ENCODE measurements at regions of chr5 and their contacts with region 1.

Region 1: GRCh38 chr5:119411935-119412602 is 40.2 kb upstream of the HSD17B4 start:
- DNase-seq: peak in 7 of 9 donors; percentile 54 to 73 (median 68)
- ATAC-seq: peak; percentile 92
- H3K4me3 ChIP-seq: peak overlapping the region; percentile 59
- H3K4me3 Mint-ChIP-seq: peak overlapping the region; percentile 88 to 93 (median 91)
- H3K27ac ChIP-seq: peak overlapping the region; percentile 15
- H3K27ac Mint-ChIP-seq: peak overlapping the region; percentile 55 to 86 (median 76)
- H3K4me1 ChIP-seq: peaks cover 0 to 5% of the 10 kb centered on the region in 2 donors
- H3K4me1 Mint-ChIP-seq: peaks cover 11 to 32% (median 20%) of the 10 kb centered on the region in 7 donors
- H3K27me3 ChIP-seq: no peaks in the 10 kb centered on the region
- H3K27me3 Mint-ChIP-seq: peaks cover 0 to 5% (median 0%) of the 10 kb centered on the region in 5 donors

Region 2: DNA sequence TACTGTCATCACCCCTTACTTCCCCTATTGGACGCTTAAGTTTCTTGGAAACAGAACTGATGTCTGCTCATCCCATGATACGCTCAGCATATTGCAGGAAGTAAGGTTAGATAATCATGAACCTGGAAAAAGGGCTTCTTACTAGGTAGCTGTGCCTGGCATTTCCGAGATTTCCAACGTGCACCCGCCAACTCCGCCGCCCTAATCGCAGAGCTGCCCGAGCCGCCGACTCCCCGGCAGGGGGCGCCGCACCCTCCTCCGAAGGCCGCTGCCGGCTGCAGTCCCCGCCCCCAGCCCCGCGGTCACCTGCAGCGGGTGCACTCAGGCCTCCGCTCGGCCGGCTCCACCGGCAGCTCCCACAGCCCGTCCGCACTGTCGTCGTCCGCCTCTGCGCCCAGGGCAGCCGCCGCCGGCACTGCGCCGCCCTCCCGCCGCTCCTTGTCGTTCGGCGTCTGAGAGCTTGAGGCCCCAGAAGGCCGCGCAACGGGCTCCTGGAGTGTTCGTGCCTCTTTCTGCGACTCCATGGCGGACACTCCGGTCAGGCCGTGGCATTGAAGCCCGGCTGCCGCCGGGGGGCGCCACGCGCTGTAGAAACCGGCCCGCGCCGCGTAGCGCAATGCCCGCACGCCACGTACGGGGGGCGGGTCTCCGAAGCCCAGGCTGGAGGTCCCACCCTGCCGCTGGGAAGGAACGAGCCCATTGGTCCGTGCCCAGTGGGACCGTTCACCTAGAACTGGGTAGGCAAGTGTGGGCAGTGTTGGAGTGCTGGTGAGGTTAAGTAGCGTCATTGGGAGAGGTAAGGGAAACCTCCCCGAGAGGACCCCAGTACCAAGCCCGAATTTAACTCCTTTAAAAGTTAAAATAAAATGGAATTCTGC is 423.8 kb before region 1 on chr5 and contains the start of gene DTWD2:
- CTCF ChIA-PET with region 1: interaction called, 54 read pairs
- POLR2A ChIA-PET with region 1: interaction called, 3 read pairs
- intact Hi-C with region 1: loop called (anchors 1 kb)
- DNase-seq: peak; percentile 84 to 98 (median 95)
- ATAC-seq: peak; percentile 95
- H3K4me3 ChIP-seq: peak within 1 kb of the TSS; percentile 59
- H3K4me3 Mint-ChIP-seq: peak within 1 kb of the TSS; percentile 78 to 87 (median 84)
- H3K27ac ChIP-seq: peak within 1 kb of the TSS; percentile 74
- H3K27ac Mint-ChIP-seq: peak within 1 kb of the TSS in 8 of 9 donors; percentile 19 to 84 (median 79)
- H3K4me1 ChIP-seq: peaks cover 6 to 8% of the 10 kb centered on the region in 2 donors
- H3K4me1 Mint-ChIP-seq: peaks cover 14 to 39% (median 28%) of the 10 kb centered on the region in 7 donors
- H3K27me3 ChIP-seq: no peaks in the 10 kb centered on the region
- H3K27me3 Mint-ChIP-seq: peaks cover 0 to 2% (median 0%) of the 10 kb centered on the region in 5 donors
- total RNA-seq, gene DTWD2: 2.6 to 5.8 (median 3.4) TPM

Region 3: DNA sequence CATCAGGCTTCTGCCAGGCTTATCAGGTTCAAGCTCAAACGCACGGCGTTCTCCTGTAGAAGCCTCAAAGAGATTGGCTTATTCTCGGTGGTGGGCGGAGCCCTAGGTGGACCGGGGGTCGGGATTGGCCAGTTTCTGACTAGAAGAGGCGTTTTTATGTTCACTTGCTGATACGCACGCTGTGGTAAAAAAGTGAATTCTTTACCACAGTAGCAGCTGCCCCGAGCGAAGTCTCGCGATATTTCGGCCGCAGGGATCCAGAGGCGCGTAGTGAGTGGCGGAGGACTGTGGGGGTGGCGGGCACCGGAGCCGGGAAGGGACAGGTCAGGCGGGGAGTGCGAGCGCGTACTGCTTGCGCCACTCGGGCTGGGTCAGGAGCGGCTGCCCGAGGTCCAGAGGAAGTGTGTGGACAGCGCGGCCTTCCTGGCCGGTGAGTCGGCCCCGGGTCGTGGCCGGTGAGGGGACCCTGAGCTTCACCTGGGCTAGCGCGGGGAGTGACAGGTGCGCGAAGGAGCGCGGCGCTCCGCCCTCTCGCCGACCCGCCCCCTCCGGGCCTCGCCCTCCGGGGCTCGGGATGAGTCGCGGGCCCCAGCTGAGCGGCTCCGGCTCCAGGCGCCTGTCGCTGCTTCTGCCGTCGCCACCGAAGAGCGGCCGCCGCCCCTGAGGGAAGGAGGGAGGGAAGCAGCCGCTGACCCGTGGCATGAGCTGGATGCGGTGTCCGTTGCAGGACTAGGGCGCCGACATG is 341.1 kb before region 1 on chr5 and contains the start of gene DMXL1:
- CTCF ChIA-PET with region 1: interaction called, 6 read pairs
- POLR2A ChIA-PET with region 1: no interaction called
- intact Hi-C with region 1: loop called (anchors 1 kb)
- DNase-seq: peak; percentile 94 to 99 (median 98)
- ATAC-seq: peak; percentile 92
- H3K4me3 ChIP-seq: peak within 1 kb of the TSS; percentile 63
- H3K4me3 Mint-ChIP-seq: peak within 1 kb of the TSS; percentile 90 to 100 (median 98)
- H3K27ac ChIP-seq: peak within 1 kb of the TSS; percentile 93
- H3K27ac Mint-ChIP-seq: peak within 1 kb of the TSS; percentile 96 to 100 (median 99)
- H3K4me1 ChIP-seq: peaks cover 22 to 25% of the 10 kb centered on the region in 2 donors
- H3K4me1 Mint-ChIP-seq: peaks cover 24 to 44% (median 38%) of the 10 kb centered on the region in 7 donors
- H3K27me3 ChIP-seq: no peaks in the 10 kb centered on the region
- H3K27me3 Mint-ChIP-seq: peaks cover 0 to 2% (median 0%) of the 10 kb centered on the region in 5 donors
- total RNA-seq, gene DMXL1: 30.5 to 40.8 (median 32.4) TPM

Region 4: DNA sequence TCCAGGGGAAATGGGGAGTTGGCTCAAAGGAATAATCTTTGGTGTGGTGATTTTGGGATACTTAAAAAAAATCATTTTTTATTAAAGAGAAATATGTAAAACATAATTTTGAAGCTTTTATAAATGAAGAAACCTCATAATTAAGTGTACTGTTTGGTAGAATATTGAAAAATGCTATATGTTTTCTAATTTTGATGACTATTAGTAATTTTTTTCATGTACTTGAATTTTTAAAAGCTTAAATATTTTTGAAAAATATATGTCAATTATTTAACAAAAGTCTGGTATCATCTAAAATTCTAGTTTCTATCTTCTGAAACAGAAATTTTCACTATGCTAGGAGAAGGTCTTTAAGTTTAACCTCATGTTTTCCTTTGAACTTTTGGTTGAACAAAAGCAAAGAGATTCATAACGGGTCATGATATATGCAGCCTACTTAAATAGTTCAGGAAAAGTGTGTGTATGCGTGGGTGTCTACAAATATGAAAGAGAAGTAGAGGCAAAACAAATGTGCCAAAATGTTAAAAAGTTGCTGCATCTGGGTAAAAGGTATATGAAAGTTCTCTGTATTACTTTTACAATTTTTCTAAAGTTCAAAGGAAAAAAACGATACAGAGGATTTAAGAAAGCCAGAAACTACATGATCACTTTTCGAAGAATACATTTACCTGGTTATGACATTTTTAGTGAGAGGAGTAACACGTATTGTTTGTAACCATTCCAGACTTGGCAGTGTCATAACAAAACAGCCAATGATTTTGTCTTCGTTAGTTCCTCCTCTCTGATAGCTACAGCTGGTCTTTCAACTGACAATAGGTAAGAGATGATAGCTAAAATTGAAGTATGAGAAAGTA is 173.6 kb before region 1 on chr5:
- CTCF ChIA-PET with region 1: interaction called, 15 read pairs
- POLR2A ChIA-PET with region 1: interaction called, 3 read pairs
- intact Hi-C with region 1: no loop called
- DNase-seq: peak in 6 of 9 donors; percentile 10 to 66 (median 56)
- ATAC-seq: peak; percentile 81
- H3K4me3 ChIP-seq: peak overlapping the region; percentile 2
- H3K4me3 Mint-ChIP-seq: peak overlapping the region; percentile 13 to 82 (median 66)
- H3K27ac ChIP-seq: peak overlapping the region; percentile 67
- H3K27ac Mint-ChIP-seq: peak overlapping the region in 8 of 9 donors; percentile 85 to 94 (median 90)
- H3K4me1 ChIP-seq: peaks cover 0 to 17% of the 10 kb centered on the region in 2 donors
- H3K4me1 Mint-ChIP-seq: peaks cover 7 to 57% (median 47%) of the 10 kb centered on the region in 7 donors
- H3K27me3 ChIP-seq: no peaks in the 10 kb centered on the region
- H3K27me3 Mint-ChIP-seq: no peaks in the 10 kb centered on the region

Region 5: GRCh38 chr5:119309326-119309725 is 102.7 kb before region 1 on chr5:
- CTCF ChIA-PET with region 1: interaction called, 47 read pairs
- POLR2A ChIA-PET with region 1: interaction called, 3 read pairs
- intact Hi-C with region 1: no loop called
- DNase-seq: no peak
- ATAC-seq: peak; percentile 24
- H3K4me3 ChIP-seq: peak overlapping the region; percentile 31
- H3K4me3 Mint-ChIP-seq: peak overlapping the region; percentile 71 to 90 (median 83)
- H3K27ac ChIP-seq: peak overlapping the region; percentile 64
- H3K27ac Mint-ChIP-seq: peak overlapping the region; percentile 92 to 99 (median 97)
- H3K4me1 ChIP-seq: peaks cover 86 to 94% of the 10 kb centered on the region in 2 donors
- H3K4me1 Mint-ChIP-seq: peaks cover 55 to 99% (median 95%) of the 10 kb centered on the region in 7 donors
- H3K27me3 ChIP-seq: no peaks in the 10 kb centered on the region
- H3K27me3 Mint-ChIP-seq: no peaks in the 10 kb centered on the region

Region 6: GRCh38 chr5:119340597-119341218 is 71.4 kb before region 1 on chr5:
- CTCF ChIA-PET with region 1: interaction called, 44 read pairs
- POLR2A ChIA-PET with region 1: interaction called, 4 read pairs
- intact Hi-C with region 1: loop called in 1 of 2 experiments (anchors 5 kb)
- DNase-seq: peak in 7 of 9 donors; percentile 57 to 72 (median 64)
- ATAC-seq: peak; percentile 71
- H3K4me3 ChIP-seq: peak overlapping the region; percentile 33
- H3K4me3 Mint-ChIP-seq: peak overlapping the region; percentile 64 to 94 (median 86)
- H3K27ac ChIP-seq: peak overlapping the region; percentile 78
- H3K27ac Mint-ChIP-seq: peak overlapping the region; percentile 84 to 99 (median 94)
- H3K4me1 ChIP-seq: peaks cover 91 to 95% of the 10 kb centered on the region in 2 donors
- H3K4me1 Mint-ChIP-seq: peaks cover 78 to 98% (median 97%) of the 10 kb centered on the region in 7 donors
- H3K27me3 ChIP-seq: no peaks in the 10 kb centered on the region
- H3K27me3 Mint-ChIP-seq: no peaks in the 10 kb centered on the region

Region 7: DNA sequence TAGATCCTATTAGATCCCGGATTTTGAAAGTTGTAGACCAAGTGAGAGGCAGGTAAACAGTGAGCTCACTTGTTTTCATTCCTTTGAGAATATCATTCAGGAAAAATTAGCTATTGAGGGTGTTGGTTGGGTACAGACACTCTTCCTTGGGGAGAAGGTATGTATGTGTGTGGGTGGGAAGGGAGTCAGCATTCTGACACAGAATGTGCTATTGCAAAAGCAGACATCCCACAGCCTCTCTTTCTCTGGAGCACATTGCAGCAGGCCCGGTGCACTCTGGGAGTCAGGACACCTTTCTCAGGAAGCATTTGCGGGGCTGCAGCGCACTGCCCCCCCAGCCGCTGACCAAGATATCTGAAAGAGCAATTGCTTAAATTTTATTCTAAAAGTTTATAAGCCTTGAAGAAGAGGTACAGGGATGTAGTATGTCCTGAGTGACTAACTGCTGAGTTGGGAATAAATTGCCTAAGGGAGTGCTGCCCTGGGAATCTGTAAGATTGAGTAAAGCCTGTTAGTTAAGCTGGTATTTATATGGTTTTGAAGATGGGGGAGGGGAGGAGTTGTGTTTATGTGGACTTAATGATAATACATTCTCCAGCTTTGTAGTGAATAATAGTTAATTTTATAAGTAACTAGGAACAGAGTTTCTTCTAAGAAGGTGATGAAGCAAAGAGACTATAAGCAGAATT is 51.0 kb before region 1 on chr5:
- CTCF ChIA-PET with region 1: interaction called, 12 read pairs
- POLR2A ChIA-PET with region 1: interaction called, 3 read pairs
- intact Hi-C with region 1: no loop called
- DNase-seq: no peak
- ATAC-seq: no peak
- H3K4me3 ChIP-seq: no peak overlapping the region
- H3K4me3 Mint-ChIP-seq: peak overlapping the region in 7 of 10 donors; percentile 12 to 98 (median 37)
- H3K27ac ChIP-seq: peak overlapping the region; percentile 55
- H3K27ac Mint-ChIP-seq: peak overlapping the region; percentile 63 to 96 (median 86)
- H3K4me1 ChIP-seq: peaks cover 85 to 89% of the 10 kb centered on the region in 2 donors
- H3K4me1 Mint-ChIP-seq: peaks cover 80 to 98% (median 96%) of the 10 kb centered on the region in 7 donors
- H3K27me3 ChIP-seq: no peaks in the 10 kb centered on the region
- H3K27me3 Mint-ChIP-seq: no peaks in the 10 kb centered on the region

Region 8: GRCh38 chr5:119395080-119395836 is 16.8 kb before region 1 on chr5:
- CTCF ChIA-PET with region 1: no interaction called
- POLR2A ChIA-PET with region 1: no interaction called
- intact Hi-C with region 1: no loop called
- DNase-seq: no peak
- ATAC-seq: no peak
- H3K4me3 ChIP-seq: no peak overlapping the region
- H3K4me3 Mint-ChIP-seq: peak overlapping the region in 4 of 10 donors; percentile 0 to 46 (median 4)
- H3K27ac ChIP-seq: no peak overlapping the region
- H3K27ac Mint-ChIP-seq: peak overlapping the region; percentile 20 to 90 (median 79)
- H3K4me1 ChIP-seq: no peaks in the 10 kb centered on the region
- H3K4me1 Mint-ChIP-seq: peaks cover 39 to 74% (median 63%) of the 10 kb centered on the region in 7 donors
- H3K27me3 ChIP-seq: no peaks in the 10 kb centered on the region
- H3K27me3 Mint-ChIP-seq: no peaks in the 10 kb centered on the region